Activated CD4-positive, alpha-beta T cell treated with anti-CD3 and anti-CD28 coated beads for 36 hours (primary cell): ENCODE measurements at regions of chr7 and their contacts with region 1.

Region 1: GRCh38 chr7:64114791-64115190 is 69.6 kb downstream of the ZNF727 start:
- DNase-seq: no peak
- ATAC-seq: no peak
- H3K4me3 Mint-ChIP-seq: no peak overlapping the region
- H3K27ac Mint-ChIP-seq: no peak overlapping the region
- H3K4me1 Mint-ChIP-seq: no peaks in the 10 kb centered on the region
- H3K27me3 Mint-ChIP-seq: no peaks in the 10 kb centered on the region

Region 2: DNA sequence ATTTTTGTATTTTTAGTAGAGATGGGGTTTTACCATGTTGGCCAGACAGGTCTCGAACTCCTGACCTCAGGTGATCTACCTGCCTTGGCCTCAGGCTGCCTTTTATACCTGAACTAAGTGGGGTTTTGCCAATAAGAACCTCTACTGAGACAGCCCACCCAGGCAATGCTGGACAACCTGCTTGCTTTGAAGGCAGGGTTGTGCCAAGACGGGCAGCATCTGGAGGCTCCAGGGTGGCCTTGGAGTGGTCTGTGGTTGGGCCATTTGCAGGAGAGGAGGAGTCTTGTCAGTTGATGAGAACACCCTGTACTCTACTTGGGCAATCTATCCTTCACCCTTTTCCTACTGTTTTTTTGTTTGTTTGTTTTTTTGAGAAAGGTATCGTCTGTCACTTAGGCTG is 16.9 kb after region 1 on chr7:
- CTCF ChIA-PET with region 1: no interaction called
- POLR2A ChIA-PET with region 1: no interaction called
- intact Hi-C with region 1: loop called in 1 of 2 experiments (anchors 2 kb)
- DNase-seq: no peak
- ATAC-seq: no peak
- H3K4me3 Mint-ChIP-seq: no peak overlapping the region
- H3K27ac Mint-ChIP-seq: no peak overlapping the region
- H3K4me1 Mint-ChIP-seq: no peaks in the 10 kb centered on the region
- H3K27me3 Mint-ChIP-seq: no peaks in the 10 kb centered on the region